Activated CD4-positive, alpha-beta memory T cell treated with anti-CD3 and anti-CD28 coated beads for 36 hours (primary cell): ENCODE measurements at regions of chr12 and their contacts with region 1.

Region 1: GRCh38 chr12:82434392-82434911 is 76.1 kb downstream of the METTL25 start:
- DNase-seq: no peak
- H3K4me3 Mint-ChIP-seq: no peak overlapping the region
- H3K27ac Mint-ChIP-seq: no peak overlapping the region
- H3K4me1 Mint-ChIP-seq: peaks cover 4% of the 10 kb centered on the region
- H3K27me3 Mint-ChIP-seq: no peaks in the 10 kb centered on the region

Region 2: GRCh38 chr12:82407481-82407880 is 27.0 kb before region 1 on chr12:
- CTCF ChIA-PET with region 1: no interaction called
- POLR2A ChIA-PET with region 1: no interaction called
- intact Hi-C with region 1: loop called (anchors 2 kb)
- DNase-seq: no peak
- H3K4me3 Mint-ChIP-seq: no peak overlapping the region
- H3K27ac Mint-ChIP-seq: no peak overlapping the region
- H3K4me1 Mint-ChIP-seq: no peaks in the 10 kb centered on the region
- H3K27me3 Mint-ChIP-seq: no peaks in the 10 kb centered on the region

Region 3: DNA sequence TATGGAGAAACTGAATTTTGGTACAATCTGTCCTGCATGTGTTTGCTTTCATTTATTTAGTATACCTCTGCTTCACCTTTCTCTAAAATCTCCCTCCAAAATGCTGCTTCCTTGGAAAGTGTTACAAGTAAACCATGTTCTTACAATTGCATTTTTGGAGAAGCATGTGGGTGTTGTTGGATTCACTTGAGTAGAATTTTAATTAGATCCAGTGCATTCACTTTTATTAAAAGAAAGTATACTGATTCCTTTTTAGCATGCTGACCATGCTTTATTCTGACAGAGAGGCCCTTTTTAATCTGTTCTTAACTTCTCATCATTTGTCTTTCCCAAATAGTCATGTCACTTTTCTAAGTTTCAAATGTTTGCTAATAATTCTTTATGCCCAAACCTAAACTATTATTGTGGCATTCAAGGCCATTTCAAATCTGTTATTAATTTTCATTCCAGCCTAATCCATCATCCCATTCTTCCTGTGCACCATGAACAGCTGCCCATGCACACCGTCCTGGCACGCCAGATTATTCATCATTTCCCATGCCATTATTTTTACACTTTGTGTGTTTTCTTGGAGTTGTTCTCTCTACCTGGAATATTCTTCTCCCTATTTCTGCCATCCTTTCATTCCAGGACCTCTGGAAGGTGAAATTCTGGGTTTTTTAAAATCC is 14.6 kb after region 1 on chr12:
- CTCF ChIA-PET with region 1: no interaction called
- POLR2A ChIA-PET with region 1: no interaction called
- intact Hi-C with region 1: no loop called
- DNase-seq: no peak
- H3K4me3 Mint-ChIP-seq: no peak overlapping the region
- H3K27ac Mint-ChIP-seq: no peak overlapping the region
- H3K4me1 Mint-ChIP-seq: no peaks in the 10 kb centered on the region
- H3K27me3 Mint-ChIP-seq: no peaks in the 10 kb centered on the region